BJ (cell line): ENCODE measurements at regions of chr3 and their contacts with region 1.

Region 1: DNA sequence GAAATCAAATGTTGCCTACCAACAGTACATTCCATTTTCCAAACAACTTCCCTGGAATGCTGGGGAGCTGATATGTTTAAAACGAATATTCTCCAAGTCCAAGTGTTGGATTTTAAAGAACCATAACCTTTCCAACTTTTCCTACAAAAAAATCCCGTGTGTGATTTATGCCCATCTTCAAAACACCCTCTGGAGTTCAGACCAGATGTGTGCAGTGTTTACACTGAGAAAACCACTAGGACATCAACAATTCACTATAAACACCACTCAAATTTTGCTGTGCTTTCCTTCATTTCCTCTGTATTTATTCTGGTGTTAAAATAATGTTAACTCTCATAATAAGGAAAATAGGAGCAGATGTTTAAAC is 2.4 kb downstream of the VGLL4 start:
- DNase-seq: no peak
- H3K4me3 ChIP-seq: peak overlapping the region; percentile 86
- H3K27me3 ChIP-seq: no peaks in the 10 kb centered on the region
- CTCF ChIP-seq: no peak

Region 2: DNA sequence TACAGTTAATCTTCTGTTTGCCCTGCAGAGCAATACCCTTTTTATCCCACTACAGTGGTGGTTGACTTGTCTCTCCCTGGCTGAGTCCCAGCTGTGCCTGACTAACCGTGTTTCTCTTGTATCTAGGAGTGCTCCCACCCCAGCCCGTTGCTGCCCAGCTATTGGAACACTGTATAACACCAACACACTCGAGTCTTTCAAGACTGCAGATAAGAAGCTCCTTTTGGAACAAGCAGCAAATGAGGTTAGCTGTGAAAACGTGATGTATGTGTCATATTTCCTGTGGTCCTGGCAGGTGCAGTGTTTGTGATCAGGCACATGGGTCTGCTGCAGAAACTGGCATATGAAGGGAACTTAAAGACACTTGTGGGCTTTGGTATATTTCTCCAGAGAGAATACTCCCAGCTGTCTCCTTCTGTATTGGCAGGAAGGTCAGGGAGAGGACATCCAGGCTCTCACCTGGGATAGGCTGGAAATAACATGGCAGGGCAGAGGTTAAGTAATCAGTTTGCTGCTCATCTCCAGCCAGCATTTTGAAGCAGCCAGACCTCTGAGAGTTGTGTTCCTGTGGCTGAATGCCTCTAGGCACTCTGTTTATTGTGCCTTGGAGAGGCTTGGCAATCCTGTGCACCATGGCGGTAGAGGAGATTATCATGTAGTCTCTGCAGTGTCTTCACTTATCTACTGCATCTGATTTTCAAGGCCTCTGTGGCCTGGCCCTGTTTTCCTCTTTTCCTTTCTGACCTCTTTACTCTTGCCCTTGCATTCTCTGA is 334.3 kb before region 1 on chr3:
- CTCF ChIA-PET with region 1: no interaction called
- POLR2A ChIA-PET with region 1: interaction called, 15 read pairs
- DNase-seq: no peak
- H3K4me3 ChIP-seq: no peak overlapping the region
- H3K27me3 ChIP-seq: no peaks in the 10 kb centered on the region
- CTCF ChIP-seq: no peak

Region 3: DNA sequence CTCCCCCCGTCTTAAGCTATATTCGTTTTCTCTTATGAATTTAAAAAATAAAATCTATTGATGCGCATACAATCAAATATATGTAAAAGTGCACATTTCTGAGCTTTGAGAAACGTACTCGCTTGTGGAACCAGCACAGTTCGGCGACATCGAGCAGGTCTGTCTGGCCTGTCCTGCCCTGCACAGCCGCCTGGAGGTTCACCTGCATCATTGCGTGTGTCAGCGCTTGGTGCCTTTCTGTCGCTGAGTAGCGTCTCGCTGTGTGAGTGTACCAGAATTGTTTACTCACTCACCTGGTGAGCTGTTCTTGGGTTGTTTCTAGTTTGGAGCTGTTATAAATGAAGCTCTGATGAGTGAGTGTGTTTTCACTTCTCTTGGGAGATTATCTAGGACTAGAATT is 101.6 kb before region 1 on chr3:
- CTCF ChIA-PET with region 1: no interaction called
- POLR2A ChIA-PET with region 1: no interaction called
- DNase-seq: no peak
- H3K4me3 ChIP-seq: no peak overlapping the region
- H3K27me3 ChIP-seq: no peaks in the 10 kb centered on the region
- CTCF ChIP-seq: no peak

Region 4: GRCh38 chr3:11690863-11691767 is 49.8 kb after region 1 on chr3:
- CTCF ChIA-PET with region 1: no interaction called
- POLR2A ChIA-PET with region 1: no interaction called
- DNase-seq: no peak
- H3K4me3 ChIP-seq: no peak overlapping the region
- H3K27me3 ChIP-seq: no peaks in the 10 kb centered on the region
- CTCF ChIP-seq: no peak